ENCODE measurements at regions of chr18 and their contacts with region 1.

Region 1: DNA sequence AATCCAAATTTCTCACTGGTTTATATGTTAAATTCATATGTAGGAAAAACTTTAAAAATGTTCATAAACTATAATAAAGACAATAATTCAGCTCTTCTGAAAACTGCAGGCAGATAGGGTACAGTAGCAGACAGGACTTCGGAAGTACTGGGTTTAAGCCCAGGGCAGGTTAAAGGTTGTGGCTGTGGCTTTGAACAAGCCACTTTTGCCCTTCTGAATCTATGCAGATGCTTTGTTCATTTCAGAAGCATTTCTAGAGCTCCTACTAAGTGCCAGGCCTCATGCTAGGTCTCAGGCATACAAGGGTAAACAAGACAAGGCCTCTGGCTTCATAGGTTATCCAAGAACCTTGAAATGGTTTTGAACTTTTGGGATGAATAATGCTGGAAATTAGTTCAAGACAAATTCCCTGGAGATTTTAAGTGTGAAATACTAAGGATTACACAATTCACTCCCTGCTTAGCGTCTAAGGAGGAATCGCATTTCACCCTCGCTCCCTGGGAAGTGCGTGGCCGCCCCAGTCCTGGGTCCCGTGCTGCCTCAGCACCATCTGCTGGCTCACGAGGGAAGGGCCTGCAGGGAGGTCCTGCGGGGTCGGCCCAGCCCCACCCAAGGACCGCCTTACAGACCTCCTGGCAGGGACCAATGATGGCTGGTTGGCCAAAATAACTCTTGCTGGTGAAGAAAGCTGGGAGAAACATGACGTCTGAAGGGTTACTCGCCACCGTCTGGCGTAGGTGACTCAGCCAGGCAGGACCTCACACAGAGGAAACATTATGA is 67.7 kb upstream of the L3MBTL4 start:
- DNase-seq: peak; percentile 54 to 75
- ATAC-seq: peak; percentile 94 to 99 (median 96)
- H3K4me3 ChIP-seq: no peak overlapping the region
- H3K27ac ChIP-seq: no peak overlapping the region
- H3K4me1 ChIP-seq: peaks cover 0 to 23% (median 0%) of the 10 kb centered on the region in 9 donors
- H3K27me3 ChIP-seq: peaks cover 0 to 7% (median 0%) of the 10 kb centered on the region in 7 donors
- CTCF ChIP-seq: peak; percentile 63 to 93 (median 84)

Region 2: GRCh38 chr18:5868218-5869115 is 613.9 kb before region 1 on chr18:
- intact Hi-C with region 1: loop called in 3 of 10 experiments (anchors 1 to 5 kb)
- DNase-seq: peak; percentile 14 to 70
- ATAC-seq: peak; percentile 72 to 87 (median 82)
- H3K4me3 ChIP-seq: no peak overlapping the region
- H3K27ac ChIP-seq: no peak overlapping the region
- H3K4me1 ChIP-seq: no peaks in the 10 kb centered on the region
- H3K27me3 ChIP-seq: peaks cover 0 to 34% (median 6%) of the 10 kb centered on the region in 7 donors
- CTCF ChIP-seq: peak; percentile 43 to 88 (median 81)

Region 3: GRCh38 chr18:6427286-6427685 is 55.1 kb before region 1 on chr18:
- intact Hi-C with region 1: loop called in 1 of 10 experiments (anchors 10 kb)
- DNase-seq: no peak
- ATAC-seq: no peak
- H3K4me3 ChIP-seq: no peak overlapping the region
- H3K27ac ChIP-seq: no peak overlapping the region
- H3K4me1 ChIP-seq: no peaks in the 10 kb centered on the region
- H3K27me3 ChIP-seq: no peaks in the 10 kb centered on the region
- CTCF ChIP-seq: no peak

Region 4: DNA sequence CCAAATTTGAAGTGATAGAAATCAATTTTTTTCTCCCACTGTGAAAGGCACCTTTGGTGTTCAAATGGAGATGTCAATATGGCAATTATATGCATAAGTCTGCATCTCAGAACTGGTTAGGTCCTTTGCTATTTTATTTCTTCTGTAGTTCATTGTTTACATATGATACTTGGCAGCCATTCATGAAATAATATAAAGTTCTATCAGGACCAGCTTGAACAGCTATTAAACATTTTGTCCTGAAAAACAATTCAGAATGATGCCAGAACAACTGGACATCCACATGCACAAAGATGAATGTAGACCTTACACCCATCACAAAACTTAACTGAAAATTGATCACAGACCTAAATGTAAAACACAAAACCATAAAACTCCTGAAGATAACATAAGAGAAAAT is 205.3 kb after region 1 on chr18:
- intact Hi-C with region 1: no loop called
- DNase-seq: no peak
- ATAC-seq: no peak
- H3K4me3 ChIP-seq: no peak overlapping the region
- H3K27ac ChIP-seq: no peak overlapping the region
- H3K4me1 ChIP-seq: peaks cover 0 to 4% (median under 1%) of the 10 kb centered on the region in 9 donors
- H3K27me3 ChIP-seq: peaks cover 0 to 8% (median 0%) of the 10 kb centered on the region in 7 donors
- CTCF ChIP-seq: no peak

Measured in heart right ventricle (tissue), 16 donors.